ENCODE measurements at regions of chr6 and their contacts with region 1.

Region 1: DNA sequence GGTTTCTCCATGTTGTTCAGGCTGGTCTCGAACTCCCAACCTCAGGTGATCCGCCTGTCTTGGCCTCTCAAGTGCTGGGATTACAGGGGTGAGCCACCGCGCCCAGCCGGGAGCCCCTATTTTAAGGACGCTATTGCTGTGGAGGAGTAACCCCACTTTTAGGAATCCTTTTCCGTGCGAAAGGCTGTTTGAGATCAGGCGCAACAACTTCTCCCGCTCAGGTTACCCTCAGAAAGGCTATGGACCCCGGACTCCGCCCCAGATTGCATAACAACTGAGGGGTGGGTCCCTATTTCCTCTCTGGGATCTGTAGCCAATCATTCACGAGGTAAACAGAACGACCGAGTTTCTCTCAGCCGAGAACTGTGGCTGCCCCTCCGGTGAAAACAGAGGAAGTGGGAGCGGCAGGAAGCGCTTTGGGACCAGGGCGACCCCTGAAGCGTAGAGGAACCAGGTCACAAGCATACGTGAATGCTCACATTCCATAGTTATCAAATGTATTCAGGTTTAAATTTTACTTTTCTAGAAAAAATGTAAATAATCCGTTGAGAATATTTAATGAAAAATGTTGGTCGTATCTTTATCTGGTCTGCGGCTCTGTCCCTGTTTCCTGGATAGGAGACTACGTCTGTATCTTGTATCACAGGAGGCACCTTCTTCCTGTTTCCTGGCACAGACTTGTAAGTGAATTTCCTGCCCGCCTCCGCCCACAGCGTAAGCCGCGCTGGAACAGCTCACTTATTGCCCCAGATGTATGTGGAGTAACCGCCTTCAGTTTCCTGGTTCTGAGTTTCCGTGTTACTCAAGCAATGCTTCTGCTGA is 26.8 kb downstream of the HLA-E start:
- DNase-seq: peak; percentile 96
- H3K4me3 ChIP-seq: peak overlapping the region; percentile 44
- H3K27ac ChIP-seq: peak overlapping the region; percentile 79
- H3K4me1 ChIP-seq: no peaks in the 10 kb centered on the region
- H3K27me3 ChIP-seq: no peaks in the 10 kb centered on the region
- CTCF ChIP-seq: no peak

Region 2: DNA sequence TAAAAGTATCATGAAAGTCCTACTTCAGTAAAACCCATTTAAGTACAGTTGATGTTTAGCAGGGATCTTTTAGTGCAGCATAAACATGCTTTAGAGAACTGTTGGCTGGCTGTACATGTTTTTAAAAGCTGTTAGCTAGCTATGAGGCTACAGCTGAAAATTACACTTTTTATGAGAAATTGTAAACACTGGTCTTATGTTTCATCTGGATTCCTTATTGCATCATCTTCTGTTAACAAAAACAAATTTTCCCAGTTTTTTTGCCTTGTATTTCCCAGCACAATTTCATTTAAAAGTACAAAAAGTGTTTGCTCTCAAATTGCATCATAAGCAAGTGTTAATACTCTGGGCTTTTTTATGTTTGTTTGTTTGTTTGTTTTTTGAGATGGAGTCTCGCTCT is 45.2 kb before region 1 on chr6:
- CTCF ChIA-PET with region 1: interaction called, 13 read pairs
- POLR2A ChIA-PET with region 1: no interaction called
- intact Hi-C with region 1: no loop called
- DNase-seq: no peak
- H3K4me3 ChIP-seq: no peak overlapping the region
- H3K27ac ChIP-seq: no peak overlapping the region
- H3K4me1 ChIP-seq: peaks cover 8% of the 10 kb centered on the region
- H3K27me3 ChIP-seq: peaks cover 47% of the 10 kb centered on the region
- CTCF ChIP-seq: no peak

Region 3: DNA sequence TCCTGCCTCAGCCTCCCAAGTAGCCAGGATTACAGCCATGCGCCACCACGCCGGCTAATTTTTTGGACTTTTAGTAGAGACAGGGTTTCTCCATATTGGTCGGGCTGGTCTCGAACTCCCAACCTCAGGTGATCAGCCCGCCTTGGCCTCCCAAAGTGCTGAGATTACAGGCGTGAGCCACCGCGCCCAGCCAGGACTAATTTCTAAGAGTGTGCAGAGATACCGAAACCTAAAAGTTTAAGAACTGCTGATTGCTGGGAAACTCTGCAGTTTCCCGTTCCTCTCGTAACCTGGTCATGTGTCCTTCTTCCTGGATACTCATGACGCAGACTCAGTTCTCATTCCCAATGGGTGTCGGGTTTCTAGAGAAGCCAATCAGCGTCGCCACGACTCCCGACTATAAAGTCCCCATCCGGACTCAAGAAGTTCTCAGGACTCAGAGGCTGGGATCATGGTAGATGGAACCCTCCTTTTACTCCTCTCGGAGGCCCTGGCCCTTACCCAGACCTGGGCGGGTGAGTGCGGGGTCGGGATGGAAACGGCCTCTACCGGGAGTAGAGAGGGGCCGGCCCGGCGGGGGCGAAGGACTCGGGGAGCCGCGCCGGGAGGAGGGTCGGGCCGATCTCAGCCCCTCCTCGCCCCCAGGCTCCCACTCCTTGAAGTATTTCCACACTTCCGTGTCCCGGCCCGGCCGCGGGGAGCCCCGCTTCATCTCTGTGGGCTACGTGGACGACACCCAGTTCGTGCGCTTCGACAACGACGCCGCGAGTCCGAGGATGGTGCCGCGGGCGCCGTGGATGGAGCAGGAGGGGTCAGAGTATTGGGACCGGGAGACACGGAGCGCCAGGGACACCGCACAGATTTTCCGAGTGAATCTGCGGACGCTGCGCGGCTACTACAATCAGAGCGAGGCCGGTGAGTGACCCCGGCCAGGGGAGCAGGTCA is 26.8 kb before region 1 on chr6 and contains the start of gene HLA-E:
- CTCF ChIA-PET with region 1: interaction called, 3 read pairs
- POLR2A ChIA-PET with region 1: no interaction called
- intact Hi-C with region 1: loop called (anchors 1 kb)
- DNase-seq: peak; percentile 99
- H3K4me3 ChIP-seq: peak within 1 kb of the TSS; percentile 83
- H3K27ac ChIP-seq: peak within 1 kb of the TSS; percentile 81
- H3K4me1 ChIP-seq: peaks cover 8% of the 10 kb centered on the region
- H3K27me3 ChIP-seq: no peaks in the 10 kb centered on the region
- CTCF ChIP-seq: no peak
- total RNA-seq, gene HLA-E: 36.9 and 41.1 TPM in 2 replicates